AG04450 (cell line): ENCODE measurements at regions of chr11 and their contacts with region 1.

Region 1: GRCh38 chr11:124758317-124759203 is 3.5 kb downstream of the ESAM start:
- DNase-seq: no peak
- H3K4me3 ChIP-seq: peak overlapping the region; percentile 46
- H3K27ac ChIP-seq: no peak overlapping the region
- H3K27me3 ChIP-seq: peaks cover 24% of the 10 kb centered on the region
- CTCF ChIP-seq: peak; percentile 66

Region 2: GRCh38 chr11:124359566-124359965 is 399.0 kb before region 1 on chr11:
- CTCF ChIA-PET with region 1: no interaction called
- POLR2A ChIA-PET with region 1: no interaction called
- DNase-seq: no peak
- H3K4me3 ChIP-seq: no peak overlapping the region
- H3K27ac ChIP-seq: no peak overlapping the region
- H3K27me3 ChIP-seq: no peaks in the 10 kb centered on the region
- CTCF ChIP-seq: no peak

Region 3: DNA sequence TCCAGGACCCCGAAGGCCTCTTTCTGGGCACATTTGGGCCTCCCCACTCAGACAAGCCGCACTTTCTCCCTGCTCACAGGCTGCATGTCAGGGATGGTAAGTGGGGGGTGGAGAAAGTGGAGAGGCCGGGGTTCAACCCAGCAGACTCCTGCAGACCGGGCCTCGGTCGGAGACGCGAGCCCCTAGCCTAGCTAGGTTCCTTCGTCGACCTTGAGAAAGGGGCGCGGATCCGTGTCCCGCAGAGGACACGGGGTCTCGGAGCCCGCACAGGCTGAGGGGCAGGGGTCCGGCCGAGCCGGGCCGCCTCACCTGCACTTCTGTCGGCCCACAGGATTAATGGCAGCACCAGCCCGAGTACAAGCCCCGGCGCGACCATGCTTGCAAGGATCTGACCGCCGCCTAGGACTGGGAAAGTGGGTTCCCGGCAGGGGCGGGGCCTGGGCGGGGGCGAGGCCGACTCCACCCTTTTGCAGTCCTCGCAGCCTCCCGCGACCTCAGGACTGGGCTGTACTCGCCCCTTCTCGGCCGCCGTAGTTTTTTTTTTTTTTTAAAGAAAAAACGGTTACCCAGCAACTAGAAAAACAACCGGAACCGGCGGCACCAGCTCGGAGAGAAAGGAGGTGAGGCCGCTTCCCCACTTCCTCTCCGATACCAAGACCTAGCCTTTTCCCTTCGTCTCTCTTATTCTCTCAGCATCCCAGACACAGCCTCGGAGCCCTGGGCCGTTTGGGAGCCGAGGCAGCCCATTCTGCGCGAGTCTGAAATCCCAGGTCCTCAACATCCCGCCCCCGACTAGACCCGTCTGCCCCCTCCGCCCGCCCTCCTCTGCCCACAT is 85.0 kb before region 1 on chr11 and contains the starts of genes SIAE and SPA17:
- CTCF ChIA-PET with region 1: interaction called, 93 read pairs
- POLR2A ChIA-PET with region 1: interaction called, 3 read pairs
- DNase-seq: peak; percentile 92
- H3K4me3 ChIP-seq: peak within 1 kb of the TSS; percentile 74
- H3K27ac ChIP-seq: peak within 1 kb of the TSS; percentile 69
- H3K27me3 ChIP-seq: no peaks in the 10 kb centered on the region
- CTCF ChIP-seq: no peak
- polyA plus RNA-seq, gene SIAE: 33.5 and 37.9 TPM in 2 replicates
- polyA plus RNA-seq, gene SPA17: 6.5 and 8.4 TPM in 2 replicates

Region 4: GRCh38 chr11:124739479-124740276 is 18.9 kb before region 1 on chr11 and contains the start of gene NRGN:
- CTCF ChIA-PET with region 1: interaction called, 19 read pairs
- POLR2A ChIA-PET with region 1: no interaction called
- DNase-seq: peak; percentile 60
- H3K4me3 ChIP-seq: peak within 1 kb of the TSS; percentile 65
- H3K27ac ChIP-seq: no peak within 1 kb of the TSS
- H3K27me3 ChIP-seq: peaks cover 15% of the 10 kb centered on the region
- CTCF ChIP-seq: no peak
- polyA plus RNA-seq, gene NRGN: 3.4 and 4.1 TPM in 2 replicates

Region 5: DNA sequence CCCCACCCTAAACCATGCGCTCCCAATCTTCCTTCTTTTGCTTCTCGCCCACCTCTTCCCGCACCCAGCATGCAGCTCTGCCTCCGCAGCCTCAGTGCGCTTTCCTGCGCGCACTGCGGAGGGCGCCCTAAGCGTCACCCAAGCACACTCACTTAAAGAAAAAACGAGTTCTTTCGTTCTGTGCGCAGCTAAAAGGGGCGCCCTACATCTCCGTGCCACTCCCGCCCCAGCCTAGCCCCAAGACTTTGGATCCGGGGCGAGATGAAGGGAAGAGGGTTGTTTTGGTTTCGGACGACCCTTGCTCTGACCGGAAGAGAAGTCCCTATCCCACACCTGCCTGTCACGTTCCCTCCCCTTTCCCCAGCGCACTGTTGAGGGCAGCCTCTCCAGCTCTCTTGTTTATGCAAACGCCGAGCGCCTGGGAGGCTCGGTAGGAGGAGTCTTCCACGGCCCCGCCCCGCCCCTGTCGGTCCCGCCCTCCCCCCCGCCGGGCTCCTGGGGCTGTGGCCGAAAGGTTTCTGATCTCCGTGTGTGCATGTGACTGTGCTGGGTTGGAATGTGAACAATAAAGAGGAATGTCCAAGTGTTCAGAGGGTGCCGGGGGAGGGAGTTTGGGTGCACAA is 11.8 kb before region 1 on chr11:
- CTCF ChIA-PET with region 1: interaction called, 11 read pairs
- POLR2A ChIA-PET with region 1: no interaction called
- DNase-seq: peak; percentile 27
- H3K4me3 ChIP-seq: peak overlapping the region; percentile 64
- H3K27ac ChIP-seq: peak overlapping the region; percentile 47
- H3K27me3 ChIP-seq: peaks cover 3% of the 10 kb centered on the region
- CTCF ChIP-seq: peak; percentile 63

Region 6: DNA sequence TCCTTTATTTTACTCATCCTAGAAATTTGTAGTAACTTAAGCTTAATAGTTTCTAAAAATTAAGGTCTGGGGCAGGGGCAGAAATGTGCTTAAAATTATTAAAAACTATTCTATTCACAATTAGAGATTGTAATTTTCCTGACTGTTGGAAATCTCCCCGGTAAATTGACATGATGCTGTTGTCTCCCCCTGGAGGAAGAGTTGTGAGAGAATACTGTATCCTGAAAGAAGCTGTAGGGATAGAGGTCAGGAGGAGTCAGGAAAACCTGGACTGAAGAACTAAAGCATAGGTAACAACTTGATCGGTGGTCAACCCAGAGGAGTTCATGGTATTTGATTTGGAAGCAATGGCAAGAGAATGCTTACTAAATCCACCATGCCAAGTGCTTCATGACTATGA is 19.7 kb after region 1 on chr11:
- CTCF ChIA-PET with region 1: interaction called, 29 read pairs
- POLR2A ChIA-PET with region 1: no interaction called
- DNase-seq: no peak
- H3K4me3 ChIP-seq: no peak overlapping the region
- H3K27ac ChIP-seq: no peak overlapping the region
- H3K27me3 ChIP-seq: no peaks in the 10 kb centered on the region
- CTCF ChIP-seq: peak; percentile 22; the same call in 1 of the 2 replicates

Region 7: GRCh38 chr11:124784051-124784450 is 25.5 kb after region 1 on chr11:
- CTCF ChIA-PET with region 1: interaction called, 18 read pairs
- POLR2A ChIA-PET with region 1: no interaction called
- DNase-seq: no peak
- H3K4me3 ChIP-seq: no peak overlapping the region
- H3K27ac ChIP-seq: no peak overlapping the region
- H3K27me3 ChIP-seq: no peaks in the 10 kb centered on the region
- CTCF ChIP-seq: no peak

Region 8: GRCh38 chr11:124829986-124830385 is 71.4 kb after region 1 on chr11:
- CTCF ChIA-PET with region 1: no interaction called
- POLR2A ChIA-PET with region 1: no interaction called
- DNase-seq: no peak
- H3K4me3 ChIP-seq: no peak overlapping the region
- H3K27ac ChIP-seq: no peak overlapping the region
- H3K27me3 ChIP-seq: peaks cover 36% of the 10 kb centered on the region
- CTCF ChIP-seq: no peak